ENCODE measurements at regions of chr10 and their contacts with region 1.

Region 1: GRCh38 chr10:6088721-6089390 is at the start of gene RBM17:
- DNase-seq: peak; percentile 95
- CTCF ChIP-seq: peak; percentile 100

Region 2: GRCh38 chr10:6014241-6014761 is 74.6 kb before region 1 on chr10:
- CTCF ChIA-PET with region 1: interaction called, 32 read pairs
- POLR2A ChIA-PET with region 1: no interaction called
- DNase-seq: peak; percentile 75
- CTCF ChIP-seq: peak; percentile 81

Region 3: GRCh38 chr10:6050801-6051445 is 37.9 kb before region 1 on chr10:
- CTCF ChIA-PET with region 1: interaction called, 34 read pairs
- POLR2A ChIA-PET with region 1: no interaction called
- DNase-seq: peak; percentile 82
- CTCF ChIP-seq: peak; percentile 30

Region 4: GRCh38 chr10:6068422-6068821 is 20.4 kb before region 1 on chr10:
- CTCF ChIA-PET with region 1: interaction called, 133 read pairs
- POLR2A ChIA-PET with region 1: no interaction called
- DNase-seq: peak; percentile 60
- CTCF ChIP-seq: no peak

Region 5: GRCh38 chr10:6136215-6137201 is 47.7 kb after region 1 on chr10:
- CTCF ChIA-PET with region 1: interaction called, 26 read pairs
- POLR2A ChIA-PET with region 1: no interaction called
- DNase-seq: peak; percentile 78
- CTCF ChIP-seq: no peak

Measured in GM10248 (cell line).